ENCODE measurements at regions of chr11 and their contacts with region 1.

Region 1: DNA sequence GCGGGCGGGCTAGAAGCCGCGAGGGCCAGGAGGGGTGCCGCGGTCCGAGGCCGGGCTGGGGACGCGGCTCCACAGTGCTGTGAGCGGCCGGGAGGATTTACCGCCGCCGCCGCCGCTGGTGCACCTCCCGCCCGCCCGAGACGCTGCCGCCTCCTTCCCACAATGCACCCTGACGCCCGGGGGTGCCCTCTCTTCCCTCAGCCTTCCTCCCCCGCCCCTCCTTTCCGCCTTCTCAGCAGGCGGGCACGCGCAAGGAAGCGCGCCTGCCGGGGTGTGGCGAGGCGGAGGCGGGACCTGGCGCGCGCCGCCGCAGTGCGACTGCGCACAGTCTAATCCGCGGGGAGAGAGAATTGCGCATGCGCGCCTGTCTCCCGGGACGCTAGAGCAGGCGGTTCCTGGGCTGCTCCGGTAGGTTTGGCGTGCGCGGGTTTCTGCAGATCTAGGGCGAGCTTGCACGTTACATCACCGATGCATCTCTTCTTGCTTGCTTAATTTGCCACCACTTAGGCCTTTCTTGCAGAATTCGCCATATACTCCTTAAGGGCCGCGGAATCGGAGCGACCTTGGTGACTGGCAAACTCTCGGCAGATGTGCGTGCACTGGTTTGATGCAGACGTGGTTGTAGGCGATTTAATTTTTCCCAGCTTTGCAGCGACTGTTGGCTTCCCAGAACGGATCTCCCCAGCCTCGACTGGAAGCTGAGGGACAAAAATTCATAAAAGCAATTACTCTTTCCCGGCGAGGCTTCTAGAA is at the starts of genes GVQW3 and THAP12:
- DNase-seq: peak; percentile 99
- H3K4me3 ChIP-seq: peak within 1 kb of the TSS; percentile 89
- H3K27ac ChIP-seq: peak within 1 kb of the TSS; percentile 82
- H3K4me1 ChIP-seq: peaks cover 23% of the 10 kb centered on the region
- H3K27me3 ChIP-seq: no peaks in the 10 kb centered on the region
- CTCF ChIP-seq: peak; percentile 34; the same call in 1 of the 2 replicates
- total RNA-seq, gene GVQW3: 6.2 and 9.9 TPM in 2 replicates
- total RNA-seq, gene THAP12: 53.1 and 55.3 TPM in 2 replicates

Region 2: DNA sequence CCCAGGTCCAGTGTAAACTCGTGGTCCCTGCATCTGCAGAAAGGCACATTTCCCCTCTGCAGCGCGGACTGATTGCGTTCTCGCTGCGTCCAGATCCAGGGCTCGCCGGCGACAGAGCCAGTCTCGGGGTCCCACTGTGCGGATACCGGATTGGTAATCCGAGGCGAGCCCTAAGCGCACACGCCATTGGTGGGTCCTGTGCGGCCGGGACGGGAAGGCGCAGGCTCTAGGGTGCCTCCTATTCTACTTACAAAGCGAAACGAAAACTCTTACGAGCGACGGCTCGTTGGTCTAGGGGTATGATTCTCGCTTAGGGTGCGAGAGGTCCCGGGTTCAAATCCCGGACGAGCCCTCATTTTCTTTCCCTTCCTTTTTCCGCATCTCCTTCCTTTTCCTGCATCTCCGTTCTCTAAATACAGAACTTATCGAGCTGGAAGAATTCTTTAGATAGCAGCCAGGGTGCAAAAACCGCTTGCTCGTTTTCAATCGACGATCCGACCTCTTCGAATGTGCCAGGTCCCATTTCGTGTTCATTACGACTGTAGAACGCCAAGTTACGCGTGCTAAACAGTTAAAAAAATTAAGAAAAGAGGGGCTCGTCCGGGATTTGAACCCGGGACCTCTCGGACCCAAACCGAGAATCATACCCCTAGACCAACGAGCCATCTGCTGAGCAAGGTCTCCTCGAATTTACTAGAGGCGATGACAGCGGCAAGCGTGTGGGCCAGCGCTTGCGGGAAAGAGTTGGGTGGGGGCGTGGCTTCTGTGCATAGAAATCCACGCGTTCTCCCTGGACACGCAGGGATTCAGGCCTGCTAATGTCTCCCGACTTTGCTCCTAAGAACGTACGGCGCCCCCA is 145.7 kb before region 1 on chr11:
- CTCF ChIA-PET with region 1: no interaction called
- POLR2A ChIA-PET with region 1: no interaction called
- intact Hi-C with region 1: loop called (anchors 1 kb)
- DNase-seq: peak; percentile 98
- H3K4me3 ChIP-seq: peak overlapping the region; percentile 74
- H3K27ac ChIP-seq: peak overlapping the region; percentile 75
- H3K4me1 ChIP-seq: peaks cover 8% of the 10 kb centered on the region
- H3K27me3 ChIP-seq: no peaks in the 10 kb centered on the region
- CTCF ChIP-seq: no peak

Region 3: DNA sequence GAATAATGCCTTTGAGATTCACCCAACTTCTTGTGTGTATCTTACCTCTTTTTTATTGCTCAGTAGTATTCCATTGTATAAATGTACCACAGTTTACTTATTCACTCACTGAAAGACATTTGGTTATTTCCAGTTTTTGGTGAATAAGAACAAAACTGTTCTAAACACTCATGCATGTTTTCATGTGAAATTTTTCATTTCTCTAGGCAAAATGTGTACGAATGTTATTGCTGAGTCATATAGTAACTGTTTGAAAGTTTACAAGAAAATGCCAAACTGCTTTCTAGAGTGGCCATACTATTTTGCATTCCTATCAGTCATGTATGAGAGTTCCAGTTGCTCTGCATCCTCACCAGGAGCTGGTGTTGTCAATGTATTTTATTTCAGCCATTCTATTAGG is 54.9 kb after region 1 on chr11:
- CTCF ChIA-PET with region 1: interaction called, 13 read pairs
- POLR2A ChIA-PET with region 1: no interaction called
- intact Hi-C with region 1: no loop called
- DNase-seq: no peak
- H3K4me3 ChIP-seq: no peak overlapping the region
- H3K27ac ChIP-seq: no peak overlapping the region
- H3K4me1 ChIP-seq: no peaks in the 10 kb centered on the region
- H3K27me3 ChIP-seq: no peaks in the 10 kb centered on the region
- CTCF ChIP-seq: no peak

Region 4: DNA sequence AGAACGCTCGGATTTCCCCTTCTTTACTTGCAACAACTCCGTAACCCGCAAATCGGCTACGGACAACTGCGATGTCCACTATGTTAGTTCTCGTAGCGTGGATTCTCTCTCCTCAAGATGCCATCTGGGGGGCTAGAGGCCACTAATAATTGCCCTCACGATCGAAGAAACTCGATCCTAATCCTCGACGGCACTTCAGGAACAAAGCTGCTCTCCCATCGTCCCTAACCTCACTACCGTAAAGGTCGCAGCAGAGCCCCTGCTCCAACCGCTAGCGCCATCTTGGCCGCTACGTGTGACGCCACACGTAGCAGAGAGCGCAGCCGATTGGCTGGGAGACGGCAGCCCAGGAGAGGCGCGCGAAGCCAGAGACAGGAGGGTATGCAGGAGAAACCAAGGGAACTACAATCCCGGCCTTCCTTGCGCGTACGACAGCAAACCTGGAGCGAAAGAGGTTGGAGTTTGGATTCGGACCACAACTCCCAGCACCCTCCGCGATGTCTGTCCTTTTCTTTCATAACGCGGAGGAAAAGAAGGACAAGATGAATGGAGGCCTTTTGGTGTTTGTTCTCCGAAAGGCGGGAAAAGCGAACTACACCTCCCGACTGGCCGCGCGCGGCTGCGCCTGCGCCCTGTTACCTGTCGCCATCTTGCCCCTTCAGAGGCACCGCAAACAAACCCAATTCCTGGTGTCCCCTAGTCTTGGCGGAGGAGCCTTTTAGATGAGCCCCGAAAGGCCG is 63.4 kb after region 1 on chr11 and contains the start of gene EMSY:
- CTCF ChIA-PET with region 1: no interaction called
- POLR2A ChIA-PET with region 1: no interaction called
- intact Hi-C with region 1: loop called (anchors 2 kb)
- DNase-seq: peak; percentile 100
- H3K4me3 ChIP-seq: peak within 1 kb of the TSS; percentile 94
- H3K27ac ChIP-seq: peak within 1 kb of the TSS; percentile 91
- H3K4me1 ChIP-seq: peaks cover 18% of the 10 kb centered on the region
- H3K27me3 ChIP-seq: no peaks in the 10 kb centered on the region
- CTCF ChIP-seq: no peak
- total RNA-seq, gene EMSY: 52.4 TPM in 2 replicates